Sigmoid colon (tissue), 7 donors: ENCODE measurements at regions of chr2 and their contacts with region 1.

Region 1: GRCh38 chr2:66897181-66897580 is 462.3 kb downstream of the MEIS1 start:
- DNase-seq: peak; percentile 74
- H3K4me3 ChIP-seq: no peak overlapping the region
- H3K27ac ChIP-seq: peak overlapping the region; percentile 7 to 91 (median 63)
- H3K4me1 ChIP-seq: peaks cover 0 to 45% (median 32%) of the 10 kb centered on the region in 4 donors
- H3K27me3 ChIP-seq: no peaks in the 10 kb centered on the region
- CTCF ChIP-seq: no peak
- EP300 ChIP-seq: peak in 2 of 4 donors; percentile 72 to 76
- POLR2A ChIP-seq: no peak

Region 2: GRCh38 chr2:66994654-66995053 is 97.5 kb after region 1 on chr2:
- intact Hi-C with region 1: loop called (anchors 5 kb)
- DNase-seq: no peak
- H3K4me3 ChIP-seq: no peak overlapping the region
- H3K27ac ChIP-seq: peak overlapping the region in 3 of 4 donors; percentile 67 to 78 (median 77)
- H3K4me1 ChIP-seq: peaks cover 0 to 43% (median 19%) of the 10 kb centered on the region in 4 donors
- H3K27me3 ChIP-seq: no peaks in the 10 kb centered on the region
- CTCF ChIP-seq: no peak
- EP300 ChIP-seq: no peak
- POLR2A ChIP-seq: no peak

Region 3: DNA sequence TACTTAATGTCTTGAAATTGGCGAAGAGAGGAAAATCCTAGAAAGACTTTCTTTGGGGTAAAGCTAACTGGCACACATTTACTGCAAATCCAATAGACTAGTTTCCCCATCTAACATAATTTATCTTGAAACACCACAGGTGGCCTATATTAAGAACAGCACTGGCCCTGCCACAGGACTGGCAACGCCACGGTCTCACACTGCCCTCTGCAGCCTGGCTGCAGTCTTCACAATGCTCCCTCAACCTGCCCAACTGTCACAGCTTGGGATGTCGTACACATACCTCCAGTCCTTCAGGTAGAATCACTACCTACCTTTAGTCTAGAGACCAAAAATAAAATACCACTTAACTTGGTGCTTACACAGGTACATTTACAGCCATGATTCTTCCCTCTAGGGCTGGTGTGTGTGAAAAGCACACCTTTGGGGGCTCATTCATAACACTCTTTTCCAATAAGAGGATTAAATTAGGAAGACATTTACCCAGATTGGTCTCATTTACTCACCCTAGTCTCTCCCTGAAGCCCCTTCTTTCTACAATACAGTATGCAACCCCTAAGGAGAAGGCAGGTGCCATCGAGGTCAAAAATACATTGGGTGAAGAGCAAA is 943.4 kb after region 1 on chr2:
- intact Hi-C with region 1: loop called (anchors 10 kb)
- DNase-seq: peak; percentile 85
- H3K4me3 ChIP-seq: no peak overlapping the region
- H3K27ac ChIP-seq: peak overlapping the region in 1 of 4 donors; percentile 29
- H3K4me1 ChIP-seq: peaks cover 0 to 18% (median 1%) of the 10 kb centered on the region in 4 donors
- H3K27me3 ChIP-seq: no peaks in the 10 kb centered on the region
- CTCF ChIP-seq: peak; percentile 59 to 84 (median 79)
- EP300 ChIP-seq: no peak
- POLR2A ChIP-seq: no peak